Posterior cingulate gyrus (tissue), 11 donors: ENCODE measurements at regions of chr1 and their contacts with region 1.

Region 1: GRCh38 chr1:15152318-15153183 is 996 bp upstream of the TMEM51 start:
- DNase-seq: peak; percentile 65 to 97 (median 80)

Region 2: GRCh38 chr1:15214527-15214926 is 62.0 kb after region 1 on chr1:
- intact Hi-C with region 1: loop called (anchors 5 kb)
- DNase-seq: no peak

Region 3: DNA sequence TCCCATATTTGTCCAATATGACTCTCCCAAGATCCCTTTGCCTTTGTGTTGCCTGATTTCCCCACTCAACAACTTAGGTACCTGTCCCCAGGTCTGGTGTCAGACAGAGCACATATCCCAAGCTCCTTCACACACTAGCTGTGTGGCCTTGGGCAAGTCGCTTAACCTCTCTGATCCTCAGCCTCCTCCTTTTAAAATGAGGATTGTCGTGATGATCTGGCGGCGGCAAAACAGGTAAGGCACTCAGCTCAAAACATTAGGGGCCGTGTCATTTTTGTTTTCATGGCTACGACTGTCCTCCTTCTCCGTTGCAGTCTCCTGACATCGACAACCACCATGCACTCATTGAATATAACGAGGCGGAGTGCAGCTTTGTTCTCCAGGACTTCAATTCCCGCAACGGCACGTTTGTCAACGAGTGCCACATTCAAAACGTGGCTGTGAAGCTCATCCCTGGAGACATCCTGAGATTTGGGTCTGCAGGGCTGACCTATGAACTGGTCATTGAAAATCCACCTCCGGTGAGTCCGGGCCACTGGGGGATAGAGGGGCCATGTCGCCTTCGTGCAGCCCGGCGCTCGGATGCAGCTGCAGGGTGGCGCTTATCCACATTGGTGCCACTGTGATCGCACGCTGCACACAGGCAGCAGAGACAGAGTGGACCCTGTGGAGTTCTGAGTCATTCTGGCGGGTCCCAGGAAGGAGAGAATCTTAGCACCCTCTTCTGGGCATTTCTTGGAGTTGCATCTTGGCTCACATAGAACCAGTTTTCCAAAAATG is 119.6 kb after region 1 on chr1:
- intact Hi-C with region 1: loop called (anchors 1 kb)
- DNase-seq: peak in 9 of 10 donors; percentile 26 to 88 (median 53)

Region 4: GRCh38 chr1:15304701-15305467 is 152.3 kb after region 1 on chr1:
- intact Hi-C with region 1: loop called (anchors 1 kb)
- DNase-seq: peak in 8 of 10 donors; percentile 57 to 91 (median 62)

Region 5: DNA sequence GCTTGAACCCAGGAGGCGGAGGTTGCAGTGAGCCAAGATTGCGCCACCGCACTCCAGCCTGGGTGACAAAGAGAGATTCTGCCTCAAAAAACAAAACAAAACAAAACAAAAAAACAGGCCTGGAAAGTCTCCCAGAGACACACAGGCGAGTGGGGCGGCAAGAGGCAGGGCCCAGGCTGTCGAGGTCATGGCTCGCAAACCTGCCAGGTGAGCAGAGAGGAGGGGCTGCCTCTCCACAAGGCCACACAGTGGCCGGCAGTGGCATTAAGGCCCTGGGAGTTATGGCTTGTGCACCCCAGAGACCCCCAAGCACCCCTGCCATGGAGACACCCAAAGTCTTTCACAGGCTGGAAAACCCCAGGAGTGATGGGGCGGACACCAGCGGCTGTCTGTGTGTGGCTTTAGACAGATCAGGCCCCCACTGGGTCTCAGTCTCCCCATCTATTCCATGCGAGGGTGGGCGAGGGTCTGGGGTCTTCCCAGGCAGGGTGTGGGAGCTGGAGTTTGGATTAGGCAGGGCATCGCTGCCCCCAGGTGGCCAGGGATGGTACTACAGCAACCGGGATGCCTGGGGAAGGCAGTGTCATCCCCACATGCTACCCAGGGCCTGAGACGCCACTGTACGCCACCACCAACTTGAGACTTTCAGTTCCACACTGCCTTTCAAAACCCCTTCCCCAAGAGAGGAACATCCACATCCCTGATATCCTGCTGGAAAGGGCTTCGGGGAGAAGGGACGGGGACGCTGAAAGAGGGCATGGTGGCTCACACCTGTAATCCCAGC is 278.4 kb after region 1 on chr1:
- intact Hi-C with region 1: loop called (anchors 10 kb)
- DNase-seq: peak; percentile 54 to 97 (median 83)

Region 6: GRCh38 chr1:15825800-15826199 is 673.2 kb after region 1 on chr1:
- intact Hi-C with region 1: no loop called
- DNase-seq: no peak